Psoas muscle (tissue), 8 donors: ENCODE measurements at regions of chr20 and their contacts with region 1.

Region 1: DNA sequence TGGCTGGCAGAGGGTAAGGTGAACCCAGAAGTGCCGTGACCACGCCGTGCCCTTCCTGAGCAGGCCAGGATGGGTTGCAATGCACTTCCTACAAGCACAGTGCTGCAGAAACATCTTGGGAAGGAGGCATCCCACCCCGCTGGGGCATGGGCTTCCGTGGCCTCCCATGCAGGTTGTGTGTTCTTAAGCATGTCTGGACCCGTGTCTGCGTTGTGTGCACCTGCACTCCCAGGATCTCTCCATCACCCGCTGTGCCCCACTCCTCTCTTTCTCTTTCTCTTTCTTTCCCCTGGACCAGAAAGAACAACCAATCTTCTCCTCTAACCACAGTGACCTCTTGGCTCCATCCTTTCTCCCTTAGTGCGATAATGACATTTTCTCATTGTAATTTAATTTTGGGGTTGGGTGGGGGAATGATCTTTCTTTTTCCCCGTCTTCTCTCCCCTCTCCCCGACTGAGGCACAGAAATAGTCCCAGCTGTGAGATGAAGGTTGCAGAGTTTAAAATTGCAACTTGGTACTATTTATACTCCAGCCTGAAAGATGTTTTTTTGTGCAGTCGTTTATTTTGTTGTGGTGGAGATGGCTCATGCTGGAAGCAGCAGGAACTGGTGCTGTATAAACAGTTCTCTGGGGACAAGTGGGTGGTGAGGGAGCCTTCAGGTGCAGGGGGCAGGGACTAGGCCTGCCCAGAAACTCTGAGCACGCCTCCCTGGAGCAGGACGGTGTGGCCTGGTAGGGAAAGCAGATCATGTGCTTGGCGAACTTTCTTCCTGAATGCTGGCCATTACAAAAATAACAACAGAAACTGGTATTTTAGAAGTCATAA is 20.5 kb downstream of the BCAS4 start:
- DNase-seq: no peak
- ATAC-seq: no peak
- H3K4me3 ChIP-seq: no peak overlapping the region
- H3K27ac ChIP-seq: no peak overlapping the region
- H3K4me1 ChIP-seq: no peaks in the 10 kb centered on the region
- H3K27me3 ChIP-seq: no peaks in the 10 kb centered on the region
- CTCF ChIP-seq: no peak

Region 2: DNA sequence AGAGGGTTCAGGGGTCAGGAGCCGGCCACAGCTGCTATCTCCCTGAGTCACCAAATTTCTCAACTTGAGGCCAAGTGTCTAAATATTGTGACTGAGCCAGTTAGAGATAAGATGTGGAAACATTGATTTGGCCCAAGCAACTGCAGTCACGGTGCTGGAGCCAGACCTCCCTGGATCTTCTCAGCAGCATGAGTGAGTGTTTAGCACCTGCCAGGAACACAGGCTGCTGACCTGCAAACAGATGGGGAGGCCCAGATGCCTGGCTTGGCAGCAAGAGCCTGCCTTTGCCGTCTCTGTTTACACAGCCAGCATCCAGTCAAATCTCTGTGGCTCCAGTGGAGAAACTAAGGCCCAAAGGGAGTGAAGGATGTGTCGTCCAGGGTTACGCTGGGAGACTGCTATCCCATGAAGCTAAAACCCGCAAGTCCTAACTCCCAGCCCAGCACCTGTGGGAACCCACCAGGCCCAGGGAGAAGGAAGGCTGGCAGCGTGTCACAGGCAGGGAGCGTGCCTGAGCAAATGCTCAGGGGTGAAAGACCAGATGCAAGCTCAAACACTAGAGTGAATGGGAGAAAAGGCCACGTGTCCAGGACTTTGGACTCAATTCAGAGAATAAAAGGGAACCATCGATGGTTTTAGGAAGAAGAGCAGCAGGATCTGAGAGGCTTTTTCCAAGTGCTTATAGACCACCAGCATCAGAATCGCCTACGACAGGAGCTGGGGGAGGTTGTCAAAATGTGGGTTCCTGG is 1231.5 kb before region 1 on chr20:
- intact Hi-C with region 1: no loop called
- DNase-seq: peak; percentile 81 to 88
- ATAC-seq: peak; percentile 74 to 85 (median 84)
- H3K4me3 ChIP-seq: no peak overlapping the region
- H3K27ac ChIP-seq: peak overlapping the region; percentile 23
- H3K4me1 ChIP-seq: no peaks in the 10 kb centered on the region
- H3K27me3 ChIP-seq: peaks cover 0 to 5% (median 3%) of the 10 kb centered on the region in 3 donors
- CTCF ChIP-seq: no peak

Region 3: GRCh38 chr20:50558483-50558947 is 256.9 kb before region 1 on chr20:
- intact Hi-C with region 1: no loop called
- DNase-seq: no peak
- ATAC-seq: peak in 2 of 4 donors; percentile 42 to 51
- H3K4me3 ChIP-seq: no peak overlapping the region
- H3K27ac ChIP-seq: no peak overlapping the region
- H3K4me1 ChIP-seq: peaks cover 35% of the 10 kb centered on the region
- H3K27me3 ChIP-seq: no peaks in the 10 kb centered on the region
- CTCF ChIP-seq: no peak

Region 4: GRCh38 chr20:50913690-50914375 is 98.5 kb after region 1 on chr20:
- intact Hi-C with region 1: loop called in 1 of 2 experiments (anchors 10 kb)
- DNase-seq: no peak
- ATAC-seq: peak; percentile 75 to 89 (median 84)
- H3K4me3 ChIP-seq: no peak overlapping the region
- H3K27ac ChIP-seq: peak overlapping the region; percentile 76
- H3K4me1 ChIP-seq: peaks cover 94% of the 10 kb centered on the region
- H3K27me3 ChIP-seq: no peaks in the 10 kb centered on the region
- CTCF ChIP-seq: no peak

Region 5: GRCh38 chr20:51104960-51105920 is 289.9 kb after region 1 on chr20:
- intact Hi-C with region 1: no loop called
- DNase-seq: no peak
- ATAC-seq: no peak
- H3K4me3 ChIP-seq: no peak overlapping the region
- H3K27ac ChIP-seq: no peak overlapping the region
- H3K4me1 ChIP-seq: no peaks in the 10 kb centered on the region
- H3K27me3 ChIP-seq: peaks cover 0 to 1% (median 0%) of the 10 kb centered on the region in 3 donors
- CTCF ChIP-seq: no peak